H1 (cell line): ENCODE measurements at regions of chr12 and their contacts with region 1.

Region 1: GRCh38 chr12:52156736-52157565 is 34.9 kb downstream of the KRT80 start:
- DNase-seq: peak in 1 of 2 experiments; percentile 98
- H3K4me3 ChIP-seq: no peak overlapping the region
- H3K27ac ChIP-seq: no peak overlapping the region
- H3K4me1 ChIP-seq: 0 out of 7 replicates have a peak, but pooled peaks cover 0 to 2% (median under 1%) of the 10 kb centered on the region in 4 experiments
- H3K27me3 ChIP-seq: peaks cover 0 to 4% (median 2%) of the 10 kb centered on the region in 4 experiments; a peak in 2 of 7 replicates
- CTCF ChIP-seq: peak in 2 of 3 experiments; percentile 98; a peak in 3 of 4 replicates
- EP300 ChIP-seq: no peak
- POLR2A ChIP-seq: no peak
- RAD21 ChIP-seq: peak; percentile 100

Region 2: DNA sequence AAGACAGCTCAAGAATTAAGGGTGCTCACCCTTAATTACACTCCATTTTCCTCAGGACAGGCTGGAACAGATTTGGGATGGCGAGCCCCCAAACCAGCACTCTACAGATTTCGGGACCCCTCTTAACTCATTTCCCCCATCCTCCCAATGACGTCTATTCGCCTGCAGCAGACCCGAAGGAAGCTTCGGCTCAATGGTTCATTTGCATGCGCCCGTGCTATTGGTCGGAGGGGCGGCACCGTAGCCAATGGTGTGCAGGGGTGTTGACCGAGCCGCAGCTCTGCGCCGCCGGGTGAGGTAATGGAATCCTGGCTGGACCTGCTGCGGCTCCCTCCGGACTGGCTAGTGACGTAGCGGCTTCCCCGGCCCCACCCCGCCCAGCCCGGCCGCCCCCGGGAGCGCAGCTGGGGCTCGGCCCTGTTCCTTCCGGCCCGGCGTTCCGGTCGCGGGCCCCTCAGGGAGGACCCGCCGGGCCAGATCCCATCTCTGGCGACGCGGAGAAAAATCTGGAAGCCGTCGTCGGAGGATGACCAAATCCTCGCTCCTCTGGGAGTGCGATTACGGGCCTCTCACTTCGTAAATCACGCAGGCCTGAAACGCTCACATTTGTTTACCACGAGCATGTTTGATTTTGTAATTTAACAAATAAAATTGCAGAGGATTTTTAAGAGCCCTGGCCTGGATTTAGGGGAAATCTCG is 124.0 kb before region 1 on chr12:
- CTCF ChIA-PET with region 1: no interaction called
- POLR2A ChIA-PET with region 1: no interaction called
- DNase-seq: peak; percentile 87 to 90
- H3K4me3 ChIP-seq: peak overlapping the region; percentile 23 to 60 (median 38); a peak in 7 of 8 replicates
- H3K27ac ChIP-seq: peak overlapping the region; percentile 39; the same call in 1 of the 2 replicates
- H3K4me1 ChIP-seq: peaks cover 9 to 13% (median 11%) of the 10 kb centered on the region in 4 experiments
- H3K27me3 ChIP-seq: peaks cover 2 to 32% (median 22%) of the 10 kb centered on the region in 4 experiments; a peak in 6 of 7 replicates
- CTCF ChIP-seq: no peak
- EP300 ChIP-seq: peak in 1 of 2 experiments; percentile 31; a peak in 1 of 3 replicates
- POLR2A ChIP-seq: peak in 1 of 2 experiments; percentile 62; a peak in 2 of 3 replicates
- RAD21 ChIP-seq: no peak

Region 3: GRCh38 chr12:52139552-52140062 is 17.3 kb before region 1 on chr12:
- CTCF ChIA-PET with region 1: interaction called, 26 read pairs
- POLR2A ChIA-PET with region 1: no interaction called
- DNase-seq: peak in 1 of 2 experiments; percentile 90
- H3K4me3 ChIP-seq: no peak overlapping the region
- H3K27ac ChIP-seq: no peak overlapping the region
- H3K4me1 ChIP-seq: peaks cover 0 to 11% (median 5%) of the 10 kb centered on the region in 4 experiments; a peak in 4 of 7 replicates
- H3K27me3 ChIP-seq: no peaks in the 10 kb centered on the region
- CTCF ChIP-seq: peak in 2 of 3 experiments; percentile 81 to 88; a peak in 3 of 4 replicates
- EP300 ChIP-seq: no peak
- POLR2A ChIP-seq: no peak
- RAD21 ChIP-seq: peak; percentile 76 to 87

Region 4: DNA sequence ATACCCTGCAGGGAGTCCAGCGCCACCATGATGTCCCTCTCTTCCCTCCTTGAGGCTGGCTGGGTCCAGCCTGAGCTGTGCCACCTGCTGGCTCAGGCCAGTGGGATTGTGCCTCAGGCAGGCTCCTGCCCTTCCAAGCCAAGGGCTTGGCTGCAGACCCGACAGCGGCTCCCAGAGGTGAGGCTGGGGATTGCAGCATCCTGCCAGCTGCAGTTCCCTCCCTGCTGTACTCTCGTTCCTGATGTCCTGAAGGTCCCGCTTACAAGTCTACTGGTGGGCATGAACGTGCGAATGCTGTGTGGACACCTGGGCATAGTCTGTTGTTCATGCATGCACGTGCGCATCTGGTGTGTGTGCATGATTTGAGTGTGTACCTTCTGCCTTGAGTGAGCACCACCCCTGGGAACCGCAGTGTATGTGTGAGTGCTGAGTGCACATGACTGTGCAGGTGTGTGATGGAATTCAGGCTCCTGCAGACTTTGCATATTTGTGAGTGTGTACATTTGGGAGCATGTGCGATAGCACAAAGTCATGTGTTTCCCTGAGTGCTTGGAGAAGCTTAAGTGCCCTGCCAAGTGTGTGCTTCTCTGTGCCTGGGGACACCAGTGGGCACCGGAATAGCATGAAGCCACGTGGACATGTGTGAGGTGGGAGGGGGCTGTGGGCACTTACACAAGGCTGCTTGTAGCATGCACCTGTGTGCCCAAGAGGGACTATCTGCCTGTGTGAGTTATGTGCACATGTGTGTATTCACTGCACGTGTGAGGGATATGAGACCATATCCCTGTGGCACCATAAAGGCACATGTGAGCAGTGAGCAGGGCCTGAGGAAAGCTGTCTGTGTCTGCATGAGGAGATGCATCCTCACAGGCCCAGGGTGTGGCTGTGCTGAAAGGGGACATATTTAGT is 56.8 kb after region 1 on chr12:
- CTCF ChIA-PET with region 1: interaction called, 29 read pairs
- POLR2A ChIA-PET with region 1: no interaction called
- DNase-seq: peak; percentile 85 to 99
- H3K4me3 ChIP-seq: no peak overlapping the region
- H3K27ac ChIP-seq: no peak overlapping the region
- H3K4me1 ChIP-seq: peaks cover 0 to 4% (median under 1%) of the 10 kb centered on the region in 4 experiments; a peak in 4 of 7 replicates
- H3K27me3 ChIP-seq: no peaks in the 10 kb centered on the region
- CTCF ChIP-seq: peak; percentile 94 to 100 (median 99)
- EP300 ChIP-seq: no peak
- POLR2A ChIP-seq: no peak
- RAD21 ChIP-seq: peak; percentile 91 to 95

Region 5: DNA sequence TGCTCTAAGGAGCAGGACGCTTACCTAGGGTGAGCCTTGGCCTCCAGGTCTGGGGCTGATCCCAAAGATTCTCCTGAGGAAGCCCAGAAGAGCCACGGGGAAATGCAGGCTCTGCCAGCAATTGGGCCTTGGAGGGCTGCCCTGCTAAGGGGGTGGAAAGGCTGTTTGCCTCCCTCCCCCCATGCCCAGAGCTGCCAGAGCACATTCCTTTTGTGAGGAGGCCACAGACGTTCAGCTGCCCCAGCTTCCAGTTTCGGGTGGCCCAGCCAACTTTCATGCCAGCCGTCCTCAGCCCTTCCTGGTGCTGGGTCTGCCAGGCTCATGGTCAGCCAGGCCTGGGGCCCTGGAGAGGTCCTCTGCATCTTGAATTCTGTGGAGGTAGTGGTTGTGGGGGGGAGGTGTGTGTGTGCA is 92.1 kb after region 1 on chr12:
- CTCF ChIA-PET with region 1: interaction called, 22 read pairs
- POLR2A ChIA-PET with region 1: no interaction called
- DNase-seq: no peak
- H3K4me3 ChIP-seq: no peak overlapping the region
- H3K27ac ChIP-seq: no peak overlapping the region
- H3K4me1 ChIP-seq: peaks cover 0 to 12% (median 5%) of the 10 kb centered on the region in 4 experiments; a peak in 5 of 7 replicates
- H3K27me3 ChIP-seq: peaks cover 4 to 29% (median 23%) of the 10 kb centered on the region in 4 experiments
- CTCF ChIP-seq: no peak
- EP300 ChIP-seq: no peak
- POLR2A ChIP-seq: no peak
- RAD21 ChIP-seq: no peak

Region 6: DNA sequence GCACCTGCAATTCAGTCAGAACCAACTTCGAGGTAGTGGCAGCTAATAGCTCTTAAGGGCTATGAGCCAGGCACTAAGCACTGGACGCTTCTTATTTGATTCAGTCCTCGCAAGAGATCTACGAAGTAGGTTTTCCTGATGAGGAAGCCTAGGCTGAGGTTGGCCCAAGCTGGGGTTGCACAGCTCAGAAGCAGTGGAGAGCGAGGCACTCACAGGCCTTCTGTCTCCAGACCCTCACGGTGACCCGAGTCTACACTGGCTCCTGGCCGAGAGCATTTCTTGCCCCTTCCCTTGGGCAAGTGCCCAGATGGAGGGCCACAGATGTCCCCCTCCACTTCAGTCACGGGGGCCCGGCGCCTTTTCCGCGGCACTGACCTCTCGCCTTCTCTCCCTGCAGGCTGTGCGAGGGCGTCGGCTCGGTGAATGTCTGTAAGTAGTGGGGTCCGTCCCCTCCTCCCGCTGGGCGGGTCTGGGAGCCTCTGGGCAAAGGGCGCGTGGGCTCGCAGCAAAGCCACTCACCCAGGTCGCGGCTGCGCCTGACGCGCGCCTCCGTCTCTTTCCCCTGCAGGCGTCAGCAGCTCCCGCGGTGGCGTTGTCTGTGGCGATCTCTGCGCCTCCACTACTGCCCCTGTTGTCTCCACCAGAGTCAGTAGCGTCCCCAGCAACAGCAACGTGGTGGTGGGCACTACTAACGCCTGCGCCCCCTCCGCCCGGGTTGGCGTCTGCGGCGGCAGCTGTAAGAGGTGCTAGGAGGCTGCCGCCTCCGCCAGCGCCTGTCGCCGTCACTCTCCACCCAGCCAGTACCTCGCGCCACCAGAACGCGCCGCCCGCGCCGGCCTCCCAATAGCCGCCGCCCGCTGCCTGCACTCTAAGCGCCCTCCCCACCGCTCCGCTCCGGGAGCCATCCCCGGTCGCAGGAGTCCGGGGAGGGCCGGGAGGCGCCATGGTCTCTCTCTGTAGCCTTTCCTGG is 151.2 kb after region 1 on chr12:
- CTCF ChIA-PET with region 1: interaction called, 27 read pairs
- POLR2A ChIA-PET with region 1: no interaction called
- DNase-seq: peak; percentile 23 to 83
- H3K4me3 ChIP-seq: peak overlapping the region; percentile 39 to 67 (median 61)
- H3K27ac ChIP-seq: no peak overlapping the region
- H3K4me1 ChIP-seq: peaks cover 0 to 4% (median 0%) of the 10 kb centered on the region in 4 experiments; a peak in 1 of 7 replicates
- H3K27me3 ChIP-seq: peaks cover 21 to 47% (median 36%) of the 10 kb centered on the region in 4 experiments
- CTCF ChIP-seq: peak in 2 of 3 experiments; percentile 14 to 24; a peak in 2 of 4 replicates
- EP300 ChIP-seq: no peak
- POLR2A ChIP-seq: no peak
- RAD21 ChIP-seq: peak in 1 of 2 experiments; percentile 15; a peak in 1 of 4 replicates

Region 7: DNA sequence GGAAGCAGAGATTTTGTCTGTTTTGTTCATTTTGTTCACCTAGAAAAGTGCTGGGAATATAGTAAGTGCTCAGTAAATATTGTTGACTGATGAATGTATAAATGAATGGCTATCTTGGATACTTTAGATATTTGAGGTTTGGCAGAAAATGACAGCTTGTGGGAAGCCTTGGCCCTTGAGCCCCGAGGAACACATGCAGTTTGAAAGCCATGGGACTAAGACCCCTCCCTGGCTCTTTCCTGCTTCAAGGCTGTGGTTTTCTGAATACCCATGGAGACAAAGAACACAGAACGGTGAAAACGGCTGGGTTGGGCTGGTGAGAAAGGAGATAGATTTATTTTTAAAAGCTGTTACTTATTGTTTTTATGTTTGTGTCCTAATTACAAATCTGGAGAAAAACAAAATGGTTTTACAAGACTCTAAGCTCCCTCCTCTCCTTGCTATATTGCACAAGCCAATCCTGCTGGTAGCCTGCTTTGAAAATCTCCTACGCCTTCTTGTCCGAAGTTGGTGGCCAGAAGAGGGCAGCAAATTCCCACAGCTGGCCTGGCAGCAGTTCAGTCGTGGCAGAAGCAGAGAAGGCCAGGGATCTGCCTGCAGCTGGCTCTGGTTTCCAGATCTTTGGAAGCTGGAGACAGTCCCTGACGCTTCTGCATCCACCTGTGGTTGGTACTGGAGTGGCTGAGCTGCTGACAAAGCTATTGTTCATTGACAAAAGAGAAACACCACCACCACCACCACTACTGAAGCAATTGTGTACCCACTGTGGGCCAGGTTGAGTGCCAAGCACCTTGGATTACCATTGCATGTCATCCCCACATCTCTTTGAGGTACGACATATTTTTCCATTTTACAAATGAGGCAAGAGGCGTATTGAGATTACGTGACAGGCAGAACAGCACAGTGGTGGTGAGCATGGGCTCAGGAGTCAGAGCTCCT is 215.5 kb after region 1 on chr12:
- CTCF ChIA-PET with region 1: interaction called, 20 read pairs
- POLR2A ChIA-PET with region 1: no interaction called
- DNase-seq: peak; percentile 57 to 84
- H3K4me3 ChIP-seq: no peak overlapping the region
- H3K27ac ChIP-seq: no peak overlapping the region
- H3K4me1 ChIP-seq: no peaks in the 10 kb centered on the region
- H3K27me3 ChIP-seq: no peaks in the 10 kb centered on the region
- CTCF ChIP-seq: peak; percentile 79 to 96 (median 94)
- EP300 ChIP-seq: no peak
- POLR2A ChIP-seq: no peak
- RAD21 ChIP-seq: peak; percentile 95 to 97